Caco-2 (cell line): ENCODE measurements at regions of chr9 and their contacts with region 1.

Region 1: GRCh38 chr9:4297151-4297785 is 2.6 kb downstream of the GLIS3 start:
- DNase-seq: peak; percentile 79 to 84
- H3K4me3 ChIP-seq: peak overlapping the region; percentile 66
- H3K4me3 Mint-ChIP-seq: peak overlapping the region; percentile 84
- H3K27ac Mint-ChIP-seq: peak overlapping the region; percentile 69
- H3K4me1 ChIP-seq: peaks cover 21% of the 10 kb centered on the region
- H3K4me1 Mint-ChIP-seq: no peaks in the 10 kb centered on the region
- H3K27me3 ChIP-seq: no peaks in the 10 kb centered on the region
- H3K27me3 Mint-ChIP-seq: no peaks in the 10 kb centered on the region
- CTCF ChIP-seq: peak in 1 of 2 experiments; percentile 33

Region 2: DNA sequence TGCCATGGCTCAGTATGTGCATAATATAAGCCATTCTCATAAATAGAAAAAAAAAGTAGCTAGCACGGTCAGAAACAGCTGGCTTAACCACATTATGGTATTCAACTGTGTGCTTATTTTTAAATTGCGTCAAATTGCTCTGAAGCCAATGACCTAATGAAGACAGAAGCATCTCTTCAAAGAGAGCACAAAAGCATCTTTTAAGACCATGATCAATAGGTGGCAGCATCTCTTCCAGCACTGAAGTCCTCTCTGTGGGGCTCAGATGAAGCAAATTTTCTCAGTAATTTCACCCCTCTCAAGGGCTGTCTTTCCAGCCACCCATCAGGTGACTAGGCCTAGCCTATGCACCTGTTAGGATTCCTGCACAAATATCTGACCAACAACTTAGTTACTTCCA is 248.8 kb before region 1 on chr9:
- CTCF ChIA-PET with region 1: no interaction called
- POLR2A ChIA-PET with region 1: no interaction called
- intact Hi-C with region 1: loop called (anchors 5 kb)
- DNase-seq: peak; percentile 15 to 34
- H3K4me3 ChIP-seq: no peak overlapping the region
- H3K4me3 Mint-ChIP-seq: no peak overlapping the region
- H3K27ac Mint-ChIP-seq: no peak overlapping the region
- H3K4me1 ChIP-seq: 0 out of 2 replicates have a peak, but pooled peaks cover 3% of the 10 kb centered on the region
- H3K4me1 Mint-ChIP-seq: no peaks in the 10 kb centered on the region
- H3K27me3 ChIP-seq: no peaks in the 10 kb centered on the region
- H3K27me3 Mint-ChIP-seq: no peaks in the 10 kb centered on the region
- CTCF ChIP-seq: peak; percentile 35 to 40

Region 3: DNA sequence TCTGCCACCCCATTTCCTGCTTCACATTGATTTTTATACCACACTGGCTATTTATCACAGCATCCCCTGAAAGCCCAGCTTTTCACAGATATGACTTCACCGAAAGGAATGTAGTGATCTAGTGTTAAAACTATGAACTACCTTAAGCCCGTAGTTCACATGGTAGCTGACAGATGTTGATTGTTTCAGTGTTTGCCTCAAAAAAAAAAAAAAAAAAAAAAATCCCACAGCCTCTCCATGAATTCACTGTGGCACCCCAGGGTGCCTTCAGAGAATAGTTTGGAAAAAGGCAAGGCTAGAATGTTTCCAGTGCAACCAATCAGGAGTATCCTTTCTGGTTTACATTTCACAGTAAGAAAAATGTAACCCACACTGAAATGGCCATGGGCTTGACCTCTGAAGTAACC is 34.5 kb before region 1 on chr9:
- CTCF ChIA-PET with region 1: interaction called, 3 read pairs
- POLR2A ChIA-PET with region 1: interaction called, 11 read pairs
- intact Hi-C with region 1: loop called (anchors 2 kb)
- DNase-seq: peak in 1 of 2 experiments; percentile 18
- H3K4me3 ChIP-seq: no peak overlapping the region
- H3K4me3 Mint-ChIP-seq: no peak overlapping the region
- H3K27ac Mint-ChIP-seq: peak overlapping the region; percentile 43
- H3K4me1 ChIP-seq: peaks cover 45% of the 10 kb centered on the region
- H3K4me1 Mint-ChIP-seq: peaks cover 38% of the 10 kb centered on the region
- H3K27me3 ChIP-seq: no peaks in the 10 kb centered on the region
- H3K27me3 Mint-ChIP-seq: no peaks in the 10 kb centered on the region
- CTCF ChIP-seq: no peak

Region 4: GRCh38 chr9:4308482-4308881 is 11.2 kb after region 1 on chr9:
- CTCF ChIA-PET with region 1: no interaction called
- POLR2A ChIA-PET with region 1: no interaction called
- intact Hi-C with region 1: no loop called
- DNase-seq: no peak
- H3K4me3 ChIP-seq: no peak overlapping the region
- H3K4me3 Mint-ChIP-seq: no peak overlapping the region
- H3K27ac Mint-ChIP-seq: no peak overlapping the region
- H3K4me1 ChIP-seq: peaks cover 27% of the 10 kb centered on the region
- H3K4me1 Mint-ChIP-seq: peaks cover 33% of the 10 kb centered on the region
- H3K27me3 ChIP-seq: no peaks in the 10 kb centered on the region
- H3K27me3 Mint-ChIP-seq: no peaks in the 10 kb centered on the region
- CTCF ChIP-seq: no peak

Region 5: GRCh38 chr9:4366591-4367330 is 69.5 kb after region 1 on chr9:
- CTCF ChIA-PET with region 1: no interaction called
- POLR2A ChIA-PET with region 1: no interaction called
- intact Hi-C with region 1: loop called (anchors 1 kb)
- DNase-seq: peak; percentile 38 to 53
- H3K4me3 ChIP-seq: no peak overlapping the region
- H3K4me3 Mint-ChIP-seq: no peak overlapping the region
- H3K27ac Mint-ChIP-seq: no peak overlapping the region
- H3K4me1 ChIP-seq: no peaks in the 10 kb centered on the region
- H3K4me1 Mint-ChIP-seq: no peaks in the 10 kb centered on the region
- H3K27me3 ChIP-seq: no peaks in the 10 kb centered on the region
- H3K27me3 Mint-ChIP-seq: no peaks in the 10 kb centered on the region
- CTCF ChIP-seq: peak; percentile 62 to 69